Activated T-helper 2 cell treated with anti-CD3 and anti-CD28 coated beads, Interferon-gamma antibody, Interleukin-2, Interleukin-4, amounts not matched to agents 10 μg/mL and 5 μg/mL and 100 μg/mL, durations not matched to agents 14 hours and 24 hours and 36 hours (primary cell): ENCODE measurements at regions of chr10 and their contacts with region 1.

Region 1: DNA sequence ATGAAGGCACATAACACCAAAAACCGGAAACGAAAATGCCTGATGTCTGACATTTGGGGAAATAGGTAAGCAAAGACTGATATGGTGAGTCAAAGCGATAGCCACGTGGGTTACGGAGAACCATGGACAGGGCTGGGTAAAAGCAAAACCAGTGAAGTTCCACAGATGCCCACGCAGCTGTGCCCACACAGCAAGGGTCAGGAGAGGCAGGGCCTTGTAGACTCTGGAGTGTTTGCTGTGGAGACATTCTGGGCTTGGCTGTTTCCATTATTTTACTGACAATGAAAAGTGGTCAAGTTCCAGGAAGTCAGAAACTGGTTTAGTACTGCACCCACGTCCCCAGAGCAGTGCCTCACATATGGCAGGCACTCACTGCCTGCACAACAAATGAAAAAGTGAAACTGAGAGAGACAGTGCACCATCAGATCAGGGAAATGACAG is 148.7 kb downstream of the ZMYND11 start:
- DNase-seq: peak; percentile 20
- H3K4me3 Mint-ChIP-seq: no peak overlapping the region
- H3K27ac Mint-ChIP-seq: peak overlapping the region; percentile 66
- H3K4me1 Mint-ChIP-seq: peaks cover 25% of the 10 kb centered on the region
- H3K27me3 Mint-ChIP-seq: no peaks in the 10 kb centered on the region

Region 2: GRCh38 chr10:266974-267425 is 16.9 kb before region 1 on chr10:
- intact Hi-C with region 1: loop called (anchors 2 kb)
- DNase-seq: no peak
- H3K4me3 Mint-ChIP-seq: no peak overlapping the region
- H3K27ac Mint-ChIP-seq: no peak overlapping the region
- H3K4me1 Mint-ChIP-seq: peaks cover 5% of the 10 kb centered on the region
- H3K27me3 Mint-ChIP-seq: peaks cover 5% of the 10 kb centered on the region

Region 3: DNA sequence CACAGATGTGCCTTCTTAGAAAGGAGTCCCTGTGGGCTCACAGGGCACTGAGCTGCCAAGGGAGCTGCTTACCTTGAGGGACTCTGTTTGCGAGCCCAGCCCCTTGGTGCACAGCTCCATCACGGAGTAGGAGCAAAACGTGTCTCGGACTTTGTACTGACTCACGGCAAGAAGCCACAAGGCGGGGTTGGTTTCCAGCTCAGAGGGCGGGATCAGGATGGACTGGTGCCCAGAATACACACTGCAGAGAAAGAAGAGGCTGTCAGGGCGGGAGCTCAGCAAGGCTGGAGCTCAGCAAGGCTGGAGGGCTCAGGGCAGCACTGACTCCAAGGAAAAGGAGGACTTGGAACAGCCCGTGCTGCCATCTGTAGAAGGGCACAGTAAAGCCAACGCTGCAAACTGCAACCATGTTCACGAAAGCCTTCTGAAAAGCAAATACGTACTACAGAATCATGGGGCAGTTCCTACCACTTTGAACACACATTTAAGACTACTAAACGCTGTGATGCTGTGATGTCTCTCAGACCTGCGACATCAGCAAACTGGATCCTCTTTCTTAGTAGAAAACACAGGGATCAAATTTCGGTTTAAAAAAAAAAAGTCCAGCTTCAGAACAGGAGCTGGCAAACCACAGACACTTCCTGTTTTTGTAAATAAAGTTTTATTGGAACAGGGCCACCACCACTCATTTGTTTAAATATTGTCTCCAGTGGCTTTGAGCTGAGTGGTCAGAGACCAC is 45.6 kb after region 1 on chr10:
- intact Hi-C with region 1: loop called (anchors 5 kb)
- DNase-seq: no peak
- H3K4me3 Mint-ChIP-seq: no peak overlapping the region
- H3K27ac Mint-ChIP-seq: peak overlapping the region; percentile 23
- H3K4me1 Mint-ChIP-seq: peaks cover 16% of the 10 kb centered on the region
- H3K27me3 Mint-ChIP-seq: no peaks in the 10 kb centered on the region